Adrenal gland (tissue), 19 donors: ENCODE measurements at regions of chr9 and their contacts with region 1.

Region 1: DNA sequence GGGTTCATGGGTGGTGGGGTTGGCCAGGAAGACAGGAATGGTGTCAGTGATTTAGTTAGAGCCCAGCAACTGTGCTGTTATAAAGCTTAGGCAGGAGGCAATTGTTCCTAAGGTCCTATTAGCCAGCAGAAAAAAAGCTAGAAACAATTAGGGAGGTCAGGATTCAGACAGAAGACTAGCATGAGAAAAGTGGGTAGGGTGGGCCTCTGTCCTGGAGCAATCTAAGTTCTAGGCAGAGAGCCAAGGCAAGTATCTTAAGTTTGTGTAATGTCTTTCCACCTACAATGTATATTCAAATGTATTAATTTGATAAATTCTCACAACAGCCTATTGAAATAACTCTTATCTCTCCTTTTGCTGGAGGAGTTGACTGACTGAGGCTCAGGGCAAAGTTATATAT is 6.1 kb upstream of the ZFAND5 start:
- DNase-seq: no peak
- H3K4me3 ChIP-seq: no peak overlapping the region
- H3K27ac ChIP-seq: no peak overlapping the region
- H3K4me1 ChIP-seq: peaks cover 3 to 5% of the 10 kb centered on the region in 2 donors
- H3K27me3 ChIP-seq: no peaks in the 10 kb centered on the region
- CTCF ChIP-seq: no peak
- POLR2A ChIP-seq: no peak

Region 2: DNA sequence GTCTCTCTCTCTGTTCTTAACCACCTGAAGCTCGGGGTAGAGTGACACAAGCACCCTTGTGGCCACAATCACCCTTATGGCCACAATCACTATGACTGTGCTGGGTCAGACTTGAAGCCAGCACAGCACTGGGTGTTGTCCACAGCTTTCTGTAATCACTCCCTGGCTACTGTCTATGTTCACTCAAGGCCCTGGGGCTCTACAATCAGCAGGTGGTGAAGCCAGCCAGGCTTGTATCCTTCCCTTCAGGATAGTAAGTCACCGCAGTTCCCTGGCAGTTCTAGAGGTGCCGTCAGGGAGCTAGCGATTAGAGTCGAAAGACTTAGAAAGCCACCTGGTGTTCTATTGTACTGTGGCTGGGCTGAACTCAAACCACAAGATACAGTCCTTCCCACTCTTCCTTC is 177.7 kb before region 1 on chr9:
- intact Hi-C with region 1: no loop called
- DNase-seq: no peak
- H3K4me3 ChIP-seq: no peak overlapping the region
- H3K27ac ChIP-seq: no peak overlapping the region
- H3K4me1 ChIP-seq: no peaks in the 10 kb centered on the region
- H3K27me3 ChIP-seq: peaks cover 3% of the 10 kb centered on the region
- CTCF ChIP-seq: no peak
- POLR2A ChIP-seq: no peak

Region 3: DNA sequence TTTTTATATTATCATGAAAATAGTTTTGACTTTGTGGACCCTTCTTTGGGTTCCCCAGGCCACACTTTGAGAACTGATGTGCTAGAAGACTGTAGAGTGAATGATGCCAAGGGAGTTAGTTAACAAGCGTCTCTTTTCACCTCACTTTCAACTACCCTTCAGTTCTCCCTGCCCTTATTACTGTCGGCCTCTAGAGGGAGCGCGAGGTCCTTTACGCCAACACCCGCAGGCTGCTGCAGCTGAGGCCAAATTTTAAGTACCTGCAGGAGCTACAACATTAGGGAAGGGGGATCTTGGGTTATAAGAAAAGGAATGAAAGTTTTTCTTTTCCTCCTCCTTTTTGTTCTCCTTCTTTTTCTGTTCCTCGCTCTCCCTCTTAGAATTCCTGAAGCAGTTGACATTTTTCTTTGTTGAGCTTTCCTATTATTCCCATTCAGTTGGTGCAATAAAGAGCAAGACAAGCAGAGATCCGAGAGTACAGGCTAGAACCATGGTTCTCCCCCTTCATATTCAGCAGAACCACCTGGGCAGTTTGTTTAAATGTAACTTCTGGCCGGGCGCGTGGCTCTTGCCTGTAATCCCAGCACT is 90.1 kb before region 1 on chr9:
- intact Hi-C with region 1: no loop called
- DNase-seq: peak; percentile 60 to 84 (median 75)
- H3K4me3 ChIP-seq: no peak overlapping the region
- H3K27ac ChIP-seq: no peak overlapping the region
- H3K4me1 ChIP-seq: no peaks in the 10 kb centered on the region
- H3K27me3 ChIP-seq: no peaks in the 10 kb centered on the region
- CTCF ChIP-seq: peak; percentile 82 to 93 (median 88)
- POLR2A ChIP-seq: no peak

Region 4: DNA sequence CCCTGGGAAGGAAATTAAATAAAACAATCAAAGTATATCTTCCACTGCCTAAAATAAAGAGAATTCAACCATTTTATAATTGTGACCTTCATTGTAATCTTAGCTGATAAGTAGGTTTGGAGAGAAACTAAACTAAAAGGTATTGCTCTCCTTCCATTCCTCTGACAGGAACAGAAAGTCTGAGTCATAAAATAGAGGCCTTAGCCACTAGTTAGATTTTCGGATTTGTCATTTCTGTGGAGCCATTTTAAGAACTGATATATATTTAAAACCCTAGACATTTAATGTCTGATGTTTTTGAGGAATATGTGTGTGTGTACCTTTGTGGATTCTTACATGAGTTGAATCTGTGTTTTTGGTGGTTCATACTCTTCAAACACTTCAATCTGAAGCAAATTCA is 138.5 kb after region 1 on chr9:
- intact Hi-C with region 1: loop called in 1 of 2 experiments (anchors 10 kb)
- DNase-seq: no peak
- H3K4me3 ChIP-seq: no peak overlapping the region
- H3K27ac ChIP-seq: peak overlapping the region; percentile 72 to 88 (median 84)
- H3K4me1 ChIP-seq: peaks cover 5 to 27% of the 10 kb centered on the region in 2 donors
- H3K27me3 ChIP-seq: no peaks in the 10 kb centered on the region
- CTCF ChIP-seq: no peak
- POLR2A ChIP-seq: no peak

Region 5: GRCh38 chr9:72586388-72587130 is 215.4 kb after region 1 on chr9:
- intact Hi-C with region 1: loop called in 1 of 2 experiments (anchors 10 kb)
- DNase-seq: peak in 4 of 7 donors; percentile 22 to 54 (median 40)
- H3K4me3 ChIP-seq: no peak overlapping the region
- H3K27ac ChIP-seq: no peak overlapping the region
- H3K4me1 ChIP-seq: no peaks in the 10 kb centered on the region
- H3K27me3 ChIP-seq: no peaks in the 10 kb centered on the region
- CTCF ChIP-seq: no peak
- POLR2A ChIP-seq: no peak